ENCODE measurements at regions of chr14 and their contacts with region 1.

Region 1: DNA sequence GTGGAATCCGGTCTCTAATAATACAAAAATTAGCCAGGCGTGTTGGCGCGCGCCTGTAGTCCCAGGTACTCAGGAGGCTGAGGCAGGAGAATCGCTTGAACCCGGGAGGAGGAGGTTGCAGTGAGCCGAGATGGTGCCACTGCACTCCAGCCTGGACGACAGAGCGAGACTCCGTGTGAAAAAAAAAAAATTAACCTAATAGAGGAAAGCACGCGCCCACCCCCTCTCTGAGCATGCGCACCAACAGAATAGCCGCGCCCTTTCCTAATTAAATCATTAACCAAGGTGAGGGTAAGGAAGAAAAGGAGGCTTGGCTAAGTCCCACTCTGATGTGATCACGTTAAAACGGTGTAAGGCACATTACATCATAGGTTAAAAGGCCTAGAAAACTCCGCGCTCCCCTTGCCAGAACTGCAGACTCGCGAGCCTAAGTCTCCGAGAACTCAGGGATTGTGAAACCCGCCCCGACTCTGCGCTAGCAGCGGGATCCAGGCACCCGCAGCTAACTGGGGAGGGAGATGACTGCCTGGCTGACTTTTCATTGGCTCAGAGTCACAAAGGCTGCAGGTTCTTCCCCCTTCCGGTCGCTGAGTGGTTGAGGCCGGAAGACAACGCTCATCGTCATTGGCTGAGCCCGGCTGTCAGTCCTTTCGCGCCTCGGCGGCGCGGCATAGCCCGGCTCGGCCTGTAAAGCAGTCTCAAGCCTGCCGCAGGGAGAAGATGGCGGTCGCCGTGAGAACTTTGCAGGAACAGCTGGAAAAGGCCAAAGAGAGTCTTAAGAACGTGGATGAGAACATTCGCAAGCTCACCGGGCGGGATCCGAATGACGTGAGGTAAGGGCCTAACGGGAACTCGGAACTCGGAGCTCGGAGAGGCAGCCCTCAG is at the start of gene PNN:
- DNase-seq: peak; percentile 97
- H3K4me3 Mint-ChIP-seq: peak within 1 kb of the TSS; percentile 94
- H3K27ac Mint-ChIP-seq: peak within 1 kb of the TSS; percentile 95
- H3K4me1 Mint-ChIP-seq: peaks cover 29% of the 10 kb centered on the region
- H3K27me3 Mint-ChIP-seq: no peaks in the 10 kb centered on the region
- total RNA-seq, gene PNN: 111 and 116 TPM in 2 replicates

Region 2: GRCh38 chr14:39154594-39155189 is 20.1 kb before region 1 on chr14:
- intact Hi-C with region 1: no loop called
- DNase-seq: no peak
- H3K4me3 Mint-ChIP-seq: no peak overlapping the region
- H3K27ac Mint-ChIP-seq: no peak overlapping the region
- H3K4me1 Mint-ChIP-seq: no peaks in the 10 kb centered on the region
- H3K27me3 Mint-ChIP-seq: no peaks in the 10 kb centered on the region

Region 3: DNA sequence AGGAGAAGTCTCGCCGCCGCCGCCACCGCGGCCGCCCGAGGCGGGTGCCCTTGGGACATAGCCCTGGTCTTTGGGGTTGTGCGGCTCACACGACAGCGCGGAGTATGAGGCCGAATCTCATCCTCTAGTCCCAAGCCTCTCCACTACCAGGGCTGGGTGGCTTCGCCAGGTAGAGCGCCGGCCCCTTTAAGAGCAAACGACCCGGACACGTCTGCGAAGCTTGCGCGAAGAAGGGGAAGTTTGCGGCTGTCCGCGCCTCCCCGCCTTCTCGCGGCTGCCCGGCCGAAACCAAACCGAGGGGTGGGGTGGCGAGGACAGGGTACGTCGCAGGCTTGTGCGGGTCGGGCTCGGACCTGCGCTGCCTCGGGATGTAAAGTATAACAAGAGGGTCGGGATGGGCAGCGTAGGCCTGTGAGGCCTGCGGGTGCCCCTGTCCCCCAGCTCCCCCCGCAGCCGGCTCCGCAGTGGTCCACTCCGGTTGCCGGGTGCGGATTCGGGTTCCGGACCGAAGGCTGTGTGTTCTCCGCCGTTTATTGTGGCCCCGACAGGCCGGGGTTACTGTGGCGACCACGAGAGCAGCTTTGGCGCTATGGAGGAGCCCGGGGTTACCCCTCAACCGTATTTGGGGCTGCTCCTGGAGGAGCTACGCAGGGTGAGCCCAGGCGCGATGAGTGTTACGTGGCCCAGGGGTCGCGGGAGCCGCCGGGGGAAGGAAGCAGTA is 92.2 kb after region 1 on chr14:
- intact Hi-C with region 1: loop called (anchors 1 kb)
- DNase-seq: peak; percentile 76
- H3K4me3 Mint-ChIP-seq: peak overlapping the region; percentile 80
- H3K27ac Mint-ChIP-seq: peak overlapping the region; percentile 79
- H3K4me1 Mint-ChIP-seq: peaks cover 52% of the 10 kb centered on the region
- H3K27me3 Mint-ChIP-seq: no peaks in the 10 kb centered on the region

Region 4: GRCh38 chr14:39368261-39368959 is 193.6 kb after region 1 on chr14:
- intact Hi-C with region 1: loop called (anchors 1 kb)
- DNase-seq: no peak
- H3K4me3 Mint-ChIP-seq: no peak overlapping the region
- H3K27ac Mint-ChIP-seq: no peak overlapping the region
- H3K4me1 Mint-ChIP-seq: no peaks in the 10 kb centered on the region
- H3K27me3 Mint-ChIP-seq: no peaks in the 10 kb centered on the region